ENCODE measurements at regions of chr1 and their contacts with region 1.

Region 1: GRCh38 chr1:6245086-6245868 is 1.3 kb downstream of the HES3 start:
- DNase-seq: peak; percentile 79
- H3K4me3 ChIP-seq: peak overlapping the region in 1 of 2 donors; percentile 17
- H3K27ac ChIP-seq: no peak overlapping the region
- H3K4me1 ChIP-seq: peaks cover 3% of the 10 kb centered on the region
- H3K27me3 ChIP-seq: no peaks in the 10 kb centered on the region
- CTCF ChIP-seq: peak; percentile 76 to 89 (median 79)
- POLR2A ChIP-seq: no peak

Region 2: GRCh38 chr1:6052543-6053205 is 192.6 kb before region 1 on chr1:
- intact Hi-C with region 1: loop called (anchors 10 kb)
- DNase-seq: peak; percentile 87
- H3K4me3 ChIP-seq: no peak overlapping the region
- H3K27ac ChIP-seq: no peak overlapping the region
- H3K4me1 ChIP-seq: peaks cover 4% of the 10 kb centered on the region
- H3K27me3 ChIP-seq: no peaks in the 10 kb centered on the region
- CTCF ChIP-seq: peak in 2 of 3 experiments; percentile 48 to 59
- POLR2A ChIP-seq: no peak

Region 3: GRCh38 chr1:6065093-6065858 is 180.0 kb before region 1 on chr1:
- intact Hi-C with region 1: no loop called
- DNase-seq: no peak
- H3K4me3 ChIP-seq: no peak overlapping the region
- H3K27ac ChIP-seq: no peak overlapping the region
- H3K4me1 ChIP-seq: no peaks in the 10 kb centered on the region
- H3K27me3 ChIP-seq: no peaks in the 10 kb centered on the region
- CTCF ChIP-seq: no peak
- POLR2A ChIP-seq: no peak

Region 4: DNA sequence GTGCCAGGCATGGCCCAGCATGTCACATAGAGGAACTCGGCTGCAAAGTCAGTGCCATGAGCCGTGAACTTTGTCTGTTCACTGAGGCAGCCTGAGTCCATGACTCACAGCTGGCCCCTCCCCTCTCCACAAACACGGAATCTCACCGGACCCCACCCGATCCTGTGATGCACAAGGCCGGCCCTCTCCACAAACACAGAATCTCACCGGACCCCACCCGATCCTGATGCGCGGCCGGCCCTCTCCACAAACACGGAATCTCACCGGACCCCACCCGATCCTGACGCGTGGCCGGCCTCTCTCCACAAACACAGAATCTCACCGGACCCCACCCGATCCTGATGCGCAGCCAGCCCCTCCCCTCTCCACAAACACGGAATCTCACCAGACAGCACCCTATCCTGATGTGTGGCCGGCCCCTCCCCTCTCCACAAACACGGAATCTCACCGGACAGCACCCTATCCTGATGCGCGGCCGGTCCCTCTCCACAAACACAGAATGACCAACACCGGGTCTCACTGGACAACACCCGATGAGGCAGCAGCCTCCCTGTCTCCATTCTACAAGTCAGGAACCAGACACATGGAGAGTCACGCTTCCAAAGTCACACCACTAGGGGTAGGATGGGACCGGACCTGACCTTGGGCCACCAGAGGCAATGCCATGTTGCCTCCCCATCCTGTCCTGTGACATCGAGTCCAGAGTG is 55.2 kb after region 1 on chr1:
- intact Hi-C with region 1: no loop called
- DNase-seq: no peak
- H3K4me3 ChIP-seq: no peak overlapping the region
- H3K27ac ChIP-seq: no peak overlapping the region
- H3K4me1 ChIP-seq: no peaks in the 10 kb centered on the region
- H3K27me3 ChIP-seq: no peaks in the 10 kb centered on the region
- CTCF ChIP-seq: no peak
- POLR2A ChIP-seq: no peak

Region 5: DNA sequence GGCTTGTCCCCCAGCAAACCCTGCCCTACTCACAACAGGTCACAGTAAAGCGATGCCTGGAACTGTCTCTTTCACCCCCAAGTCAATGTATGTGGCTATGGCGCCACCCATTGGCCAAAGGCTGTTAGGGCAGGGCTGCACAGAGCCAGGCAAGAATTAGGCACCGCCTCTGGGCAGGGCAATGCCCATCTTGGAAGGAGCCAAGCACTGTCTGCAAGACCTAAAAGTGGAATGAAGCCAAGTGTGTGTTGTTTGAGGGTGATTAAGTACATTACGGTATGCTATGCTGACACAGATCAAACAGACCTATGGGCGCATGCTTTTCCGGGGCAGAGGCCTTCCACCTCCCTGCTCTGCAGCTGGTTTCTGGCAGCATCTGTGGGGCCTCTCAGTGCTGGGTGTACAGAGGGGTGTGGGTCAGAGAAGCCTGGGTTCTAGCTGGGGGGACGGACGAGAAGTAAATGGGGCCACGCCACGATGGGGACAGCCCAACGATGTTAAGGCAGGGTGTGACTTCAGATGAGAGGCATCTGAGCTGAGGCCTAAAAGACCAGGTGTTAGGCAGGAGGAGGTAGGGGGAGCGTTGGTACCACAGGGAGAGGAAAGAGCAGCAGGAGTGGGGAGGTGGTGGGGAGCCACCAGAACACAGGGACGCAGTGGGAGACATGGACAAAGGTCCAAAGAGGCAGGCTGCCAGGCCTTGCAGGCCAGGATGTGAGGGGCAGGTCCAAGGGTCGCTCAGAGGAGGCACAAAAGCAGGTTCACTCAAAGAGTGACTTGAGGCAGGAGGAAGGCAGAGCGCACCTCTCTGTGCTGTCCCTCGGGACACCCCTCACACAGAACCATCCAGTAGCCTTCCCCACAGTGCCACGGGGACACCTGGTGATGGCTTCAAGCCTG is 98.5 kb after region 1 on chr1:
- intact Hi-C with region 1: loop called (anchors 5 kb)
- DNase-seq: peak; percentile 85
- H3K4me3 ChIP-seq: no peak overlapping the region
- H3K27ac ChIP-seq: no peak overlapping the region
- H3K4me1 ChIP-seq: no peaks in the 10 kb centered on the region
- H3K27me3 ChIP-seq: no peaks in the 10 kb centered on the region
- CTCF ChIP-seq: peak; percentile 66 to 91 (median 84)
- POLR2A ChIP-seq: no peak

Region 6: GRCh38 chr1:6401673-6402072 is 156.4 kb after region 1 on chr1:
- intact Hi-C with region 1: loop called (anchors 10 kb)
- DNase-seq: no peak
- H3K4me3 ChIP-seq: no peak overlapping the region
- H3K27ac ChIP-seq: no peak overlapping the region
- H3K4me1 ChIP-seq: no peaks in the 10 kb centered on the region
- H3K27me3 ChIP-seq: no peaks in the 10 kb centered on the region
- CTCF ChIP-seq: no peak
- POLR2A ChIP-seq: no peak